Upper lobe of right lung (tissue), 1 donor: ENCODE measurements at regions of chr1 and their contacts with region 1.

Region 1: GRCh38 chr1:32939655-32940371 is 24.8 kb downstream of the RNF19B start:
- DNase-seq: no peak
- ATAC-seq: peak; percentile 77
- H3K4me3 ChIP-seq: no peak overlapping the region
- H3K27ac ChIP-seq: peak overlapping the region; percentile 47
- H3K4me1 ChIP-seq: peaks cover 16% of the 10 kb centered on the region
- H3K27me3 ChIP-seq: no peaks in the 10 kb centered on the region
- CTCF ChIP-seq: no peak

Region 2: GRCh38 chr1:32773018-32773763 is 166.6 kb before region 1 on chr1:
- intact Hi-C with region 1: no loop called
- DNase-seq: peak; percentile 91
- ATAC-seq: peak; percentile 88
- H3K4me3 ChIP-seq: no peak overlapping the region
- H3K27ac ChIP-seq: no peak overlapping the region
- H3K4me1 ChIP-seq: peaks cover 19% of the 10 kb centered on the region
- H3K27me3 ChIP-seq: no peaks in the 10 kb centered on the region
- CTCF ChIP-seq: peak; percentile 91

Region 3: GRCh38 chr1:33055210-33056008 is 115.6 kb after region 1 on chr1:
- intact Hi-C with region 1: loop called (anchors 10 kb)
- DNase-seq: peak; percentile 75
- ATAC-seq: peak; percentile 97
- H3K4me3 ChIP-seq: no peak overlapping the region
- H3K27ac ChIP-seq: peak overlapping the region; percentile 24
- H3K4me1 ChIP-seq: peaks cover 10% of the 10 kb centered on the region
- H3K27me3 ChIP-seq: no peaks in the 10 kb centered on the region
- CTCF ChIP-seq: peak; percentile 73

Region 4: DNA sequence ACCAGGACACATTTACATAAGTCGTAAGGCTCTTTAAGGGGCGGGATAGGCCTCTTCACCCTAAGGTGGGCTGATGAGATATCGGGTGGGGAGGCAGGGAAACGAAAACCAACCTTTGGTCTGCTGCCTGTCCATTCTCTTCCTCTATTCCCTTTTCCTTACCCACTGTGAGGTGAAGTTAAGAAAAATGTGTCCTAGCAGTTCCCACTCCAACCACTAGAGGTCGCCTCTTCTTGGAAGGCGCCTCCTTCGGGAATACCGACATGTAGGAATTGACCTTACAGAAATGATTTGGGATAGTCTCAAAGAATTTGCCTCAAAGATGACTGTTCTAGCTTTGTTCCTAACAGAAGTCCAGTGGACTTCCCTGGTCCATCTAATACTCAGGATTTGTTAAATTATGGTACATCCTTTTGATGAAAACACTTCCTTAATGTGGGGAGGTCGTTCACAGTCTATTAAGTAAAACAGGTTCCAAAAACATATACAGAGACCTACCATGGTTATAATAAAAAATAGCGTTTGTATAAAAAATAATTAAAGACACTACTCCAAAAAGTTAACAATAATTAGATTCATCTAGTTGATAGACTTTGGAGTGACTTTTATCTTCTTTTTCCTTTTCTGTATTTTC is 155.3 kb after region 1 on chr1:
- intact Hi-C with region 1: no loop called
- DNase-seq: no peak
- ATAC-seq: peak; percentile 59
- H3K4me3 ChIP-seq: no peak overlapping the region
- H3K27ac ChIP-seq: no peak overlapping the region
- H3K4me1 ChIP-seq: peaks cover 9% of the 10 kb centered on the region
- H3K27me3 ChIP-seq: no peaks in the 10 kb centered on the region
- CTCF ChIP-seq: peak; percentile 99